ENCODE measurements at regions of chr2 and their contacts with region 1.

Region 1: DNA sequence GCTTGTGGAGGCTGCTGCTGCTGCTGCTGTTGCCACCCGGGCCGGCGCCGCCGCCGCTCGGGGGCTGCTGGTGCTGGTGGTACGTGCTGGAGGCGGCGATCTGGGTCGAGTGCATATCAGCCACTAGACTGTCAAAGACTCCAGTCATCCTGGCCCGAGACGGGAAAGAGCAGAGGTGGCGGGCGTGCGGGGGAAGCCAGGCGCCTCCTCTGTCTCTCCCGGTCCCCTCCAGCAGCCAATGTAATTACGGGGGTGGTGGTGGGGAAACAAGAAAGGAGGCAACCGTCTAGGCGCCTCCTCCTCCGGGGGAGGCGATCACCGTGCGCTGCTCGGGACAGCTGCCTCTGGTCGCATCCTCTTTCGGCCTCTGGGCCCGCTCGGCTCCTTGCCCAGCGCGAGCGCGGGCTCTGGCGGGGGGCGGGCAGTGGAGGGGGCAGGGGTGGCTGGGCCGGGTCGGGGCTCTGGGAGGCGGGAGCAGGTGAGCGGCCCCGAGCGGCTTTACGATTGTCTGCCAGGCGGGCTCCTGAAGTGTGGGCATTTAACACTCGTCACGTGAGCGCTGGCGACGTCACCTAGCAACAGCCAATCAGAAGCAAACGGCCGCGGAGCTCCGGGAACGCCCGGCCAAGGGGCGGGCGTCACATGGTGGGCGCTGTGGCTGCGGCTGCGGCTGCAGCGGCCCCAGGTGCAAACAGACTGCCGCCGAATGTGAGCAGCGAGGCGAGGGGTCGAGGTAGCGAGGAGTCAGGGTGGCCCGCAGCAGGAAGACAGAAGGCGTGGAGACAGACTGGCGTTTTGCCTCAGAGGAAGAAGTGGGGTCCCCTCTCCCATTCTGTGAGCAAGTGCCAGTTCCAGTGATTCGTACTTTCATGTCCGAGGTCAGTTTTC is at the start of gene DLX2:
- DNase-seq: peak; percentile 53
- ATAC-seq: peak; percentile 68
- H3K4me3 Mint-ChIP-seq: peak within 1 kb of the TSS; percentile 80
- H3K27ac Mint-ChIP-seq: peak within 1 kb of the TSS; percentile 61
- H3K4me1 Mint-ChIP-seq: peaks cover 39% of the 10 kb centered on the region
- H3K27me3 Mint-ChIP-seq: peaks cover 56% of the 10 kb centered on the region
- CTCF ChIP-seq: no peak
- total RNA-seq, gene DLX2: 0.16 TPM in 1 of 2 replicates, not detected in the other

Region 2: DNA sequence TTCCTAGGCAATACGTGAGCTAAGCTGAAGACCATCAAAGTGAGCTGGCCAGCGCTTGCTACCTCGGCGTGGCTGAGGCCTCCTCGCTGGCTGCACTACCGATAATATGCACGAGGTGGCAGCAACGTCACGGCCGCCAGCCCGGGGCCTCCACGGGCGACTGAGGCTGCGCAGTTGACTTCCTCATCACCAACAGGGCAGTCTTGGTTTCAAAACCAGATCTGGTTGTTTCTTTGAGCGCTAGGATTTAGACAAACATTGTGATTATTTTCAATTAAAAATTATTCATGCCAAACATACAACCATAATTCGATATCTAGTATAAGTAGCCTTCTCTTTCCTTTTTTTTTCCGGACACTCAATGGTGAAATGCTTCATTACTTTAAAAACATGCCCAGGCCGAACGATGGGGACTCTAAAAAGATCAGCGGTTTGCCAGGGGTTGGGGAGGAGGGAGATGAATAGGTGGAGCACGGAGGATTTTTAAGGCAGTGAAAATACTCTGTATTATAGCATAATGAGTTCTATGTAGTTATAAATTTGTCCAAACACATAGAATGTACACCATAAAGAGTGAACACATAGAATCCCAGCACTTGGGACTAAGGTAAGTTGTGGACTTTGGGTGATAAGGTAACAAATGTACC is 528.4 kb before region 1 on chr2:
- CTCF ChIA-PET with region 1: interaction called, 4 read pairs
- POLR2A ChIA-PET with region 1: no interaction called
- intact Hi-C with region 1: loop called (anchors 2 kb)
- DNase-seq: peak; percentile 81
- ATAC-seq: peak; percentile 100
- H3K4me3 Mint-ChIP-seq: no peak overlapping the region
- H3K27ac Mint-ChIP-seq: peak overlapping the region; percentile 16
- H3K4me1 Mint-ChIP-seq: peaks cover 5% of the 10 kb centered on the region
- H3K27me3 Mint-ChIP-seq: no peaks in the 10 kb centered on the region
- CTCF ChIP-seq: peak; percentile 76

Region 3: GRCh38 chr2:171703574-171704347 is 398.9 kb before region 1 on chr2:
- CTCF ChIA-PET with region 1: interaction called, 6 read pairs
- POLR2A ChIA-PET with region 1: no interaction called
- intact Hi-C with region 1: loop called (anchors 1 kb)
- DNase-seq: no peak
- ATAC-seq: no peak
- H3K4me3 Mint-ChIP-seq: no peak overlapping the region
- H3K27ac Mint-ChIP-seq: no peak overlapping the region
- H3K4me1 Mint-ChIP-seq: peaks cover 18% of the 10 kb centered on the region
- H3K27me3 Mint-ChIP-seq: no peaks in the 10 kb centered on the region
- CTCF ChIP-seq: no peak

Region 4: DNA sequence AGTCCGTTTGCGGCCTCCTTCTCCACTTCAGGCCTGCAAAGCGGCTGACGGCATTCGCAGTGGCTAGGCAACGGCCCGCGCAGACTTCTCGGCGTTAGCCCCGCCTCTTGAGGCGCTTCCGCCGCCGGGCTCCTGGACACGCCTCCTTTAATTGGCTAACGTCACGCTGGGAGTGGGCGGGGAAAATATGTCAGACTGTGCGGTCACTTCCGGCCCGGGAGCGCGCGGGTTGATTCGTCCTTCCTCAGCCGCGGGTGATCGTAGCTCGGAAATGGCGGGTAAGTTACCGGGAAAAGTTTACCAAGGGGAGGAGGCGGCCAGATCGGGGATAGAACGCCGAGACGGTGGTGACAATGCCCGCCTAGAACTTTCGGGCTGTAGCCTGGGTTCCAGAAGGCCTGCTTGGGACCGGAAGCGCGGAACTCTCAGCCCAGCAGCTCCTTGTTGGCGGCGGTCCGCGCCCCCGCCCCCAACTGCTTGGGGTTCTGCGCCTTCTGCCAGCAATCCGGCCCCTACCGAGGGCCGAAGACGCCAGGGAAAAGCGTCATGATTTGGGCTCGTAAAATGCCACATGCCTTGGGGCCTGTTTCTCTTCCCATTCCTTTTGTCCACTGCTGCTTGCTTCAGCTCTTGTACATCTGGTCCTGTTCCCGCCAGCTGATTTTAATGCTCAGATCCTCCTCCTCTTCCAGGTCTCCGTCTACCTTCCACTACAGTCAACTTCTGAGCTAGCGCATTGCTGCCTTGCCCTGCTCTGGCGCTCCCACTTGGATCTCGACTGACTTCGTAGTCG is 180.2 kb before region 1 on chr2 and contains the start of gene HAT1:
- CTCF ChIA-PET with region 1: interaction called, 3 read pairs
- POLR2A ChIA-PET with region 1: no interaction called
- intact Hi-C with region 1: loop called (anchors 2 kb)
- DNase-seq: peak; percentile 94
- ATAC-seq: peak; percentile 97
- H3K4me3 Mint-ChIP-seq: peak within 1 kb of the TSS; percentile 100
- H3K27ac Mint-ChIP-seq: peak within 1 kb of the TSS; percentile 99
- H3K4me1 Mint-ChIP-seq: peaks cover 33% of the 10 kb centered on the region
- H3K27me3 Mint-ChIP-seq: no peaks in the 10 kb centered on the region
- CTCF ChIP-seq: no peak
- total RNA-seq, gene HAT1: 35.9 and 36.2 TPM in 2 replicates

Region 5: DNA sequence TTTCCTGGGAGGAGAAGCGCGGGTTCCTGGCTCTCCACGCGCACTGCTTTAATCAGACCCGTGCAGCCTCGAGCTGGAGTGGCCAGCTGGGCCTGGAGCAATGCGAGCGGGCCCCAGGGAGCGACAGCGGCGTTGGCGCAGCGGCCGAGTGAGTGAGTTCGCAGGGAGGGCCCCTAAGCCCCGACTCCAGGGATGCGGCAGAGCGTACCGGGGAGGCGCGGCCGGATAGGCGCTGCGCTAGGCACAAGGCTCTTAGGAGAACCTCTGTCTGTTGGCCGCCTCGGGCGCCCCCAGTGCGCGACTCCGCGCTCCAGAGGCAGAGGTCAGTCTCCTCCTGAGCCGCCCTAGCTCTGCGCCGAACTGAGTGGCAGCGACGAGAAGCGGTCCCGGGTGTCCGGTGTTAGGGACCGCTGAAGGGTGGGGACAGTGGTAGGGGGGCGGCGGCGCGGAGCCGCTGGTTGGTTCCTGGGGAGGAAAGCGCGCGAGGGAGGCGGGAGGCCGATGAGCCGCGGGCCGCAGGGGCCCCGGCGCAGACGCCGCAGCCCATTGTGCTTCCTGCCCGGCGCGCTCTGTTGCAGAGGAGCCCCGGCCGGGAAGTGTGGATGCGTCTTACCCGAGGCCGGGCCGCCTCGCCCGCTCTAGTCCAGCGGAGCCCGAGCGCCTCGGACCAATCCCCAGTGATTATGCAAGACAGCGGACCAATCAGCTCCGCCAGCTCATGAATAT is 17.7 kb before region 1 on chr2:
- CTCF ChIA-PET with region 1: interaction called, 5 read pairs
- POLR2A ChIA-PET with region 1: interaction called, 4 read pairs
- intact Hi-C with region 1: loop called (anchors 1 kb)
- DNase-seq: peak; percentile 46
- ATAC-seq: peak; percentile 43
- H3K4me3 Mint-ChIP-seq: peak overlapping the region; percentile 75
- H3K27ac Mint-ChIP-seq: peak overlapping the region; percentile 79
- H3K4me1 Mint-ChIP-seq: peaks cover 44% of the 10 kb centered on the region
- H3K27me3 Mint-ChIP-seq: peaks cover 75% of the 10 kb centered on the region
- CTCF ChIP-seq: no peak

Region 6: DNA sequence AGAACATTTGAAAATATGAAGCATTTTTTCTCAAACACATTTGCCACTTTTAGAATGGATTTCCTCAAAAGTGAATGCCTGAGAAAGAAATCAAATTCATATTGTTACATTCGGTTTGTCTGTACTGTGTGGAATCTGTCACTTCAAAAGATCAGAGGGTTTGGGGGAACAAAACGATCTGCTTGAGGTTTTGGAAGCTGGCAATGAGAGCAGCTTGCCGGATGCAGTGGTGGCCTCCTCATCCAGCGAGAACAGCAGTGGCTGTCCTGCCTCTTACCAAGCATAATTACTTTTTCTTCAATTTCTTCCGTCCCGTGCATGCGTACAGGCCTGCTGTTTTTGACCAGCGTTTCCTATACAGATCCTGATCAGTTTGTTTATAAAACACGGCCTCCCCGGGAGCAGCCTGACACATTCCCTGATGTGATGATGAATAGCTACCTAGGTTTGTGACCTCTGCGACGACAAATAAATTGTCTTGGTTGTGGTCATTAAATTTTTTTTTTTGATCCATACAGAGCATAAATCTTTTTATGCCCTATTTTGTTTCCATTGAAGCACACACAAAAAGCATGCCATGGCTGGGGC is 369.9 kb after region 1 on chr2:
- CTCF ChIA-PET with region 1: no interaction called
- POLR2A ChIA-PET with region 1: no interaction called
- intact Hi-C with region 1: no loop called
- DNase-seq: no peak
- ATAC-seq: no peak
- H3K4me3 Mint-ChIP-seq: no peak overlapping the region
- H3K27ac Mint-ChIP-seq: no peak overlapping the region
- H3K4me1 Mint-ChIP-seq: no peaks in the 10 kb centered on the region
- H3K27me3 Mint-ChIP-seq: no peaks in the 10 kb centered on the region
- CTCF ChIP-seq: no peak

Measured in activated B cell treated with CpG ODN at 0.5 μM for 24 hours (primary cell).